ENCODE measurements at regions of chr6 and their contacts with region 1.

Region 1: GRCh38 chr6:136643850-136644596 is 93.8 kb upstream of the MAP7 start:
- DNase-seq: peak; percentile 83
- ATAC-seq: peak; percentile 83
- H3K4me3 ChIP-seq: no peak overlapping the region
- H3K4me3 Mint-ChIP-seq: no peak overlapping the region
- H3K27ac ChIP-seq: no peak overlapping the region
- H3K27ac Mint-ChIP-seq: peak overlapping the region; percentile 29
- H3K4me1 ChIP-seq: peaks cover 7 to 10% of the 10 kb centered on the region in 2 donors
- H3K4me1 Mint-ChIP-seq: peaks cover 8% of the 10 kb centered on the region
- H3K27me3 ChIP-seq: no peaks in the 10 kb centered on the region
- H3K27me3 Mint-ChIP-seq: no peaks in the 10 kb centered on the region
- CTCF ChIP-seq: peak; percentile 94

Region 2: DNA sequence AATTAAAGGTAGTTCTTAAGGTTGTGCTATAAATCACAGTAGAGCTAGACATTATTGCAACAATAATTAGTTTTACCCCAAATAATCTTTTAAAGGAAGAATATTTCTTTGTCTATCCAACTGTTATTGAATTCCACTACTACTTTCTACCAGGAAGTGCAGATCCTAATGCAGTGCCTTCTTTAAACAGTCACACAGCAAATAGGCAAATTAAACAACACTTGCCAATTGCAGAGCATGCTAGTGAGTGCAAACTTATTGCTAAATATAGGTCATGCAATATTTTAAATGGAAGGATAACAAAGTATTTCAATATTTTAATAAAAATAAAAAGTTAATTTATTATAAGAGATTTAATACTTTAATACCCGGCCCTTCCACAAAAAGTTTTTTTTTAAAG is 247.1 kb before region 1 on chr6:
- CTCF ChIA-PET with region 1: no interaction called
- POLR2A ChIA-PET with region 1: no interaction called
- intact Hi-C with region 1: no loop called
- DNase-seq: no peak
- ATAC-seq: no peak
- H3K4me3 ChIP-seq: no peak overlapping the region
- H3K4me3 Mint-ChIP-seq: no peak overlapping the region
- H3K27ac ChIP-seq: no peak overlapping the region
- H3K27ac Mint-ChIP-seq: no peak overlapping the region
- H3K4me1 ChIP-seq: no peaks in the 10 kb centered on the region
- H3K4me1 Mint-ChIP-seq: no peaks in the 10 kb centered on the region
- H3K27me3 ChIP-seq: no peaks in the 10 kb centered on the region
- H3K27me3 Mint-ChIP-seq: peaks cover 7% of the 10 kb centered on the region
- CTCF ChIP-seq: no peak

Region 3: DNA sequence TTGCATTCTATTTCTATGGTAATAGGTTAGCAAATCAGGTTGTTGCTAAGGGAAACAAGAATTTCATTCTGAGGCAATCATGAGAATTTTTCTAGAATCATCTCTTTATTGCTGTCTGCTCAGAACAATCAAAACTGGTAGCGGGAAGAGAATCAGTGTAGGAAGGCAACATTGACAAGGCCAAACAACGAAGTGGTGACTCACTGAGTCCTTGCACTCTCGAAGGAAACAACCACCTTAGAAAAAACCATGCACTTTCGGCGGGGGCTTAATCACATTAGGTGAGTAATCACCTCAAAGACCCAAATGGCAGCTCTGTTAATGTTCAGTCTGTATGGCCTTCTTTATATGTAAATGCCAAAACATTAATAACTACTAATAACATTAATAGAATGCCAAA is 15.0 kb before region 1 on chr6:
- CTCF ChIA-PET with region 1: interaction called, 17 read pairs
- POLR2A ChIA-PET with region 1: no interaction called
- intact Hi-C with region 1: no loop called
- DNase-seq: no peak
- ATAC-seq: no peak
- H3K4me3 ChIP-seq: no peak overlapping the region
- H3K4me3 Mint-ChIP-seq: no peak overlapping the region
- H3K27ac ChIP-seq: no peak overlapping the region
- H3K27ac Mint-ChIP-seq: no peak overlapping the region
- H3K4me1 ChIP-seq: no peaks in the 10 kb centered on the region
- H3K4me1 Mint-ChIP-seq: no peaks in the 10 kb centered on the region
- H3K27me3 ChIP-seq: no peaks in the 10 kb centered on the region
- H3K27me3 Mint-ChIP-seq: no peaks in the 10 kb centered on the region
- CTCF ChIP-seq: no peak

Region 4: DNA sequence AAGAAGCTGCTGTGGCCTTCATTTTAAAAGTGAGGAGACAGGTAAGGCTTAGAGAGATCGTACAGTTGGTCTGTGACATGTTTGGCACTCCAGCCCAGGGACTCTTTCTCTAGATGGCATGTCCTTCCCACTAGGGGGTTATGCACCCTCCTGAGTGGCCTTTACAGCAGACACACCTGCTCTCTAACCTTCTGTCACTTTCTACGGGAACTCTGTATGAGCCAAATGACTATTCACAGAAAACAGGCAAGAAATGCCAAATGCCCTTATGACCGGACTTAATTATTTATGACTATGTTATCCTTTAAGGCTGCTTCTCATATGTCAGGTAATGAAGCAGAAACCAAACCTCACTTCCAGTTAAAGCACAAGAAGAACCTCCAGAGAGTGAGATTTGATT is 57.0 kb after region 1 on chr6:
- CTCF ChIA-PET with region 1: interaction called, 11 read pairs
- POLR2A ChIA-PET with region 1: no interaction called
- intact Hi-C with region 1: no loop called
- DNase-seq: no peak
- ATAC-seq: no peak
- H3K4me3 ChIP-seq: no peak overlapping the region
- H3K4me3 Mint-ChIP-seq: no peak overlapping the region
- H3K27ac ChIP-seq: no peak overlapping the region
- H3K27ac Mint-ChIP-seq: no peak overlapping the region
- H3K4me1 ChIP-seq: peaks cover 3 to 8% of the 10 kb centered on the region in 2 donors
- H3K4me1 Mint-ChIP-seq: peaks cover 17% of the 10 kb centered on the region
- H3K27me3 ChIP-seq: no peaks in the 10 kb centered on the region
- H3K27me3 Mint-ChIP-seq: no peaks in the 10 kb centered on the region
- CTCF ChIP-seq: no peak

Region 5: GRCh38 chr6:136728976-136729515 is 85.0 kb after region 1 on chr6:
- CTCF ChIA-PET with region 1: interaction called, 14 read pairs
- POLR2A ChIA-PET with region 1: no interaction called
- intact Hi-C with region 1: no loop called
- DNase-seq: no peak
- ATAC-seq: no peak
- H3K4me3 ChIP-seq: no peak overlapping the region
- H3K4me3 Mint-ChIP-seq: no peak overlapping the region
- H3K27ac ChIP-seq: no peak overlapping the region
- H3K27ac Mint-ChIP-seq: no peak overlapping the region
- H3K4me1 ChIP-seq: peaks cover 3 to 4% of the 10 kb centered on the region in 2 donors
- H3K4me1 Mint-ChIP-seq: peaks cover 50% of the 10 kb centered on the region
- H3K27me3 ChIP-seq: no peaks in the 10 kb centered on the region
- H3K27me3 Mint-ChIP-seq: no peaks in the 10 kb centered on the region
- CTCF ChIP-seq: no peak

Region 6: DNA sequence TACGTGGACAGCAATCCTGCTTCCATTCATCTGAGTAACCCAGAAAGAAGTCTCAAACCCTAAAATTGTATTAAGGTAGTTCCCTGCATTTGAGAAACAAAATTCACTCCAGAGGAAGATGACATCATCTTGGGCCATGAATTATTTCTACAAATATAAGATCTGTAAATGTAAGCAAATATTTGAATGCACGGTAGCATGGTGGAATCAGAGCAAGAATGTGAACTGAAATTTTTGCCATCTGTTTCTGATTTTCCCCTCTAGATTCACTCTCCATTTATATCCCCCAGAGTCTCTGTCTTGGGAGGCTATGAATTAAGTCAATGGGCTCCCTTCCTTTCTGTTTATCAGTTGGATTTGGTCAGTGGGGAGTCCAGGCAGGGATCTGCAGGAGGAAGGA is 154.0 kb after region 1 on chr6:
- CTCF ChIA-PET with region 1: interaction called, 433 read pairs
- POLR2A ChIA-PET with region 1: interaction called, 16 read pairs
- intact Hi-C with region 1: loop called (anchors 1 kb)
- DNase-seq: no peak
- ATAC-seq: no peak
- H3K4me3 ChIP-seq: no peak overlapping the region
- H3K4me3 Mint-ChIP-seq: no peak overlapping the region
- H3K27ac ChIP-seq: no peak overlapping the region
- H3K27ac Mint-ChIP-seq: no peak overlapping the region
- H3K4me1 ChIP-seq: peaks cover 6 to 8% of the 10 kb centered on the region in 2 donors
- H3K4me1 Mint-ChIP-seq: peaks cover 7% of the 10 kb centered on the region
- H3K27me3 ChIP-seq: peaks cover 0 to 5% (median 0%) of the 10 kb centered on the region in 4 experiments
- H3K27me3 Mint-ChIP-seq: peaks cover 3% of the 10 kb centered on the region
- CTCF ChIP-seq: no peak

Region 7: GRCh38 chr6:136921936-136922684 is 278.1 kb after region 1 on chr6 and contains the start of gene SLC35D3:
- CTCF ChIA-PET with region 1: interaction called, 17 read pairs
- POLR2A ChIA-PET with region 1: no interaction called
- intact Hi-C with region 1: loop called (anchors 1 kb)
- DNase-seq: peak; percentile 62
- ATAC-seq: peak; percentile 45
- H3K4me3 ChIP-seq: peak within 1 kb of the TSS; percentile 16 to 64 (median 50)
- H3K4me3 Mint-ChIP-seq: peak within 1 kb of the TSS; percentile 89
- H3K27ac ChIP-seq: no peak within 1 kb of the TSS
- H3K27ac Mint-ChIP-seq: peak within 1 kb of the TSS; percentile 50
- H3K4me1 ChIP-seq: peaks cover 33 to 38% of the 10 kb centered on the region in 2 donors
- H3K4me1 Mint-ChIP-seq: peaks cover 30% of the 10 kb centered on the region
- H3K27me3 ChIP-seq: peaks cover 0 to 57% (median 32%) of the 10 kb centered on the region in 4 experiments
- H3K27me3 Mint-ChIP-seq: peaks cover 42% of the 10 kb centered on the region
- CTCF ChIP-seq: no peak
- total RNA-seq, gene SLC35D3: not detected in 2 replicates

Measured in B cell (primary cell).